B cell (primary cell): ENCODE measurements at regions of chr20 and their contacts with region 1.

Region 1: DNA sequence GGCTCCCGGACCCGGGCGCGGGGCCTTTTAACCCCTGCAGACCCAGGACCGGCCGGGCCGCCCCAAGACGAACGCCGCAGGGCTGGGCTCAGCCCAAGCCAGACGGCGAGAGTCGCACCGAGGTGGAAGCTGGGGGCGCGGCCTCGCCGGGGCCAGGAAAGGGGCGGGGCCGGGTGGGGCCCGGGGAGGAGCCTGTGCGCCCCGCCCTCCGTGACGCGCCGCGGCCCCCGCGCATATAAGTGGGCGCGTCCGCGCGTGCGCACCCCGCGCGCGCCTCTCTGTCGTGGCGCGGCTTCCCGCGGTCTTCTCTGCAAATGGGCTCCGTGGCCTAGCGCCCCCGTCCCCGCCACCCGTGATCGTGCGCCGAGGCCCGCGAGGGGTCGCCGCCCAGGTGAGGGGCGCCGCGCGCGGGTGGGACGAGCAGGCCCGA is at the start of gene PPDPF:
- DNase-seq: peak; percentile 92
- ATAC-seq: peak; percentile 81
- H3K4me3 ChIP-seq: peak within 1 kb of the TSS; percentile 21 to 79 (median 74)
- H3K4me3 Mint-ChIP-seq: peak within 1 kb of the TSS; percentile 86
- H3K27ac ChIP-seq: peak within 1 kb of the TSS; percentile 63 to 76
- H3K27ac Mint-ChIP-seq: peak within 1 kb of the TSS; percentile 90
- H3K4me1 ChIP-seq: peaks cover 16 to 23% of the 10 kb centered on the region in 2 donors
- H3K4me1 Mint-ChIP-seq: peaks cover 31% of the 10 kb centered on the region
- H3K27me3 ChIP-seq: peaks cover 0 to 10% (median 3%) of the 10 kb centered on the region in 4 experiments
- H3K27me3 Mint-ChIP-seq: peaks cover 4% of the 10 kb centered on the region
- CTCF ChIP-seq: no peak
- total RNA-seq, gene PPDPF: 149 and 162 TPM in 2 replicates

Region 2: GRCh38 chr20:63309261-63310071 is 211.1 kb before region 1 on chr20:
- CTCF ChIA-PET with region 1: no interaction called
- POLR2A ChIA-PET with region 1: no interaction called
- intact Hi-C with region 1: no loop called
- DNase-seq: no peak
- ATAC-seq: no peak
- H3K4me3 ChIP-seq: no peak overlapping the region
- H3K4me3 Mint-ChIP-seq: no peak overlapping the region
- H3K27ac ChIP-seq: no peak overlapping the region
- H3K27ac Mint-ChIP-seq: no peak overlapping the region
- H3K4me1 ChIP-seq: no peaks in the 10 kb centered on the region
- H3K4me1 Mint-ChIP-seq: no peaks in the 10 kb centered on the region
- H3K27me3 ChIP-seq: peaks cover 0 to 12% (median 0%) of the 10 kb centered on the region in 4 experiments
- H3K27me3 Mint-ChIP-seq: peaks cover 4% of the 10 kb centered on the region
- CTCF ChIP-seq: peak; percentile 58

Region 3: DNA sequence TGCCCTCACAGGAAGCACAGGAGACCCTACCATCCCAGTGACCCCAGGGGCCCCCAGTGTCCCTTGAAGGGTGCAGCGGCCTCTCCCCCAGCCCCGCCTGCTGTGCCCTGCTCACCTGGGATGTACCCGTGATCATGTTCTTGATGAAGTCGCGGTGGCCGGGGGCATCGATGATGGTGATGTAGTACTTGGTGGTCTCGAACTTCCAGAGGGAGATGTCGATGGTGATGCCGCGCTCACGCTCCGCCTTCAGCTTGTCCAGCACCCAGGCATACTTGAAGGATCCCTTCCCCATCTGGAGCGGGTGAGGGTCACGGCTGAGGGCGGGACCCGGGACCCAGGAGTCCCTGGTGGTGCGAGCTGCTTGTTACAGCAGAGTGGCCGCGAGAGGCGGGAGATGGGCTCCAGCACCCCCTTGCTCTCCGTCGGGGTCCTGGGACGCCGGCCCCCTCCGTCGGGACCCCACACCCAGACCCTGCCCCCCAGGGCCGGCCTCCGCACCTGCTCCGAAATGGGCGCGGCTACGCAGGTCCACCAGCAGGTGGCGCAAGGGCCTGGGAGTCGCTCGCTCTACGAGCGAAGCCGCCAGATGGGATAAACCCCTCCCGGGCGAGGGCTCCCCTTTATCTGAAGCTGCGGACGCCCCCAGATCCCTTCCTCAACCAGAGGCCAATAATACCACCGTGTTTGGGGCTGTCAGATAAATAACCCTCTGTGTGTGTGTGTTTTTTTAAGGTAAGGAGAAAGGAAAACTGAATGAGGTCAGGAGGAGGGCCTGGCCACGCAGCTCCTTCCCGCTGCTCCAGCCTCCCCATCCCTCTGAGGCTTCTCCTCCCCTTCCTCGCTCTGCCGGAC is 24.6 kb before region 1 on chr20:
- CTCF ChIA-PET with region 1: interaction called, 9 read pairs
- POLR2A ChIA-PET with region 1: interaction called, 5 read pairs
- intact Hi-C with region 1: loop called (anchors 2 kb)
- DNase-seq: peak; percentile 84
- ATAC-seq: peak; percentile 66
- H3K4me3 ChIP-seq: peak overlapping the region in 4 of 5 experiments; percentile 8 to 40 (median 34)
- H3K4me3 Mint-ChIP-seq: peak overlapping the region; percentile 79
- H3K27ac ChIP-seq: no peak overlapping the region
- H3K27ac Mint-ChIP-seq: no peak overlapping the region
- H3K4me1 ChIP-seq: peaks cover 19 to 26% of the 10 kb centered on the region in 2 donors
- H3K4me1 Mint-ChIP-seq: peaks cover 7% of the 10 kb centered on the region
- H3K27me3 ChIP-seq: peaks cover 0 to 40% (median 16%) of the 10 kb centered on the region in 4 experiments
- H3K27me3 Mint-ChIP-seq: peaks cover 11% of the 10 kb centered on the region
- CTCF ChIP-seq: peak; percentile 95

Region 4: DNA sequence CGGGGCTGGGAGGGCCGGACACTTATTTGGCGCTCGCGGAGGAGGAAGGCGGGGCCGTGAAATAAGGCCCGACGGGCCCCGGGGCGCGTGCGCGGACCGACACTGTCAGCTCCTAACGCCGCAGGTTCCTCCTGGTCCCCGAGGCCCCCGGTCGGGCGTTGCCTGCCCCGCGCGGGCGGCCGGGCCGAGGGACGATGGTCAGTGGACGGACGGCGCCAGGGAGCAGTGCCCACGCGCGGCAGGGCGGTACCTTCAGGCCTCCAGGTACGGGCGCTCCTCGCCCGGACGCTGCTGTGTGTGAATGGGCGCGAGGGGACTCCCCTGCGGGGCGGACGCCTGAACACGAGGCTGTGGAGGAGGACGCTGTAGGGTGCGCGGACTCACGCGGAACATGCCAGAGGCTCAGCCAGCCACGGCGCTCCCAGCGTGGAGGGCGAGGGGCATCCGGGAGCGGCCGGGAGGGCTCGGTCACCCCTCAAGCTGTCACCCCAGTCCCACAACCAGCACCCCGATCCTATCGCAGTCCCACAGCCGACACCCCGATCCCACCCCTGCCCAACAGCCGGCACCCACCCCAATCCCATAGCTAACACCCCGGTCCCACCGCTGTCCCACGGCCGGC is 106.7 kb after region 1 on chr20:
- CTCF ChIA-PET with region 1: no interaction called
- POLR2A ChIA-PET with region 1: interaction called, 6 read pairs
- intact Hi-C with region 1: loop called (anchors 1 kb)
- DNase-seq: peak; percentile 98
- ATAC-seq: peak; percentile 78
- H3K4me3 ChIP-seq: peak overlapping the region; percentile 38 to 90 (median 87)
- H3K4me3 Mint-ChIP-seq: peak overlapping the region; percentile 95
- H3K27ac ChIP-seq: peak overlapping the region; percentile 75 to 84
- H3K27ac Mint-ChIP-seq: peak overlapping the region; percentile 93
- H3K4me1 ChIP-seq: peaks cover 33 to 47% of the 10 kb centered on the region in 2 donors
- H3K4me1 Mint-ChIP-seq: peaks cover 37% of the 10 kb centered on the region
- H3K27me3 ChIP-seq: no peaks in the 10 kb centered on the region
- H3K27me3 Mint-ChIP-seq: no peaks in the 10 kb centered on the region
- CTCF ChIP-seq: no peak

Region 5: GRCh38 chr20:63657937-63658748 is 137.6 kb after region 1 on chr20 and contains the start of gene RTEL1:
- CTCF ChIA-PET with region 1: interaction called, 3 read pairs
- POLR2A ChIA-PET with region 1: no interaction called
- intact Hi-C with region 1: loop called (anchors 1 kb)
- DNase-seq: peak; percentile 95
- ATAC-seq: peak; percentile 91
- H3K4me3 ChIP-seq: peak within 1 kb of the TSS; percentile 51 to 94 (median 84)
- H3K4me3 Mint-ChIP-seq: peak within 1 kb of the TSS; percentile 98
- H3K27ac ChIP-seq: peak within 1 kb of the TSS; percentile 47 to 70
- H3K27ac Mint-ChIP-seq: peak within 1 kb of the TSS; percentile 96
- H3K4me1 ChIP-seq: peaks cover 21 to 36% of the 10 kb centered on the region in 2 donors
- H3K4me1 Mint-ChIP-seq: peaks cover 21% of the 10 kb centered on the region
- H3K27me3 ChIP-seq: peaks cover 0 to 28% (median 10%) of the 10 kb centered on the region in 4 experiments
- H3K27me3 Mint-ChIP-seq: no peaks in the 10 kb centered on the region
- CTCF ChIP-seq: no peak
- total RNA-seq, gene RTEL1: 32.6 and 35.3 TPM in 2 replicates

Region 6: DNA sequence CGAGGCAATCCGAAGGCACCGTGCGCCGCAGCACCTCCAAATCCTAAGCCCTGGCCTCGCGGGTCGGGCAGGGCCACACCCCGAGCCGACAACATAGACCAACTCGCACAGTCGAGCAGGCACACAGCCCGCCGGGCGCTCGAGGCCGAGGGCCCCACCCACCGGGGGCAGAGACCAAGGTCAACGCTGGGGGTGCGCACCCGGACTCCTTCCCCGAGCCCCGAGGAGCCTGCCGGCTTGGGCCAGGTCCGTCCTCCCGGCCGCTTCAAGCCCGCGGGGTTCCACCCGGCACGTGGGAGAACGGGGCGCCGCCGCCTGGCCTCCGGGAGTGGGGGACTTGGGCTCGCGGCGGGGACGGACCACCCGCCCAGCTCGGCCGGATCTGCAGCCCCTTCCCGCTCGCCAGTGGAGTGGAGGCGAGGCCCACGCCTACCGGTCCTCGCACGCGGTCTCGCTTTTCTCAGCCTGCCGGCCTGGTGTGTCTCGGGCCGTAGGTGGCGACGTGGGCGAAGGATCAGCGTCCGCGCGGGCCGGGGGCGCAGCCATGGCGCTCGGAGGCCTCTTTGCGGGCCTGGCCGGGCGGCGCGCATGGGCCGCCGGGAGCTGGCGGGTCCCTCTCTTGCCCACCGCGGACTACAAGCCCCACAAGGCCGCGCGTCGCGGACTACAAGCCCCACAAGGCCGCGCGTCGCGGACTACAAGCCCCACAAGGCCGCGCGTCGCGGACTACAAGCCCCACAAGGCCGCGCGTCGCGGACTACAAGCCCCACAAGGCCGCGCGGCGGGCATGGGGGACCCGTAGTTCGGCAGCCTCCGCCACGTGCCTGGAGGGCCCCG is 435.5 kb after region 1 on chr20 and contains the start of gene UCKL1:
- CTCF ChIA-PET with region 1: no interaction called
- POLR2A ChIA-PET with region 1: no interaction called
- intact Hi-C with region 1: loop called (anchors 2 kb)
- DNase-seq: peak; percentile 91
- ATAC-seq: peak; percentile 76
- H3K4me3 ChIP-seq: peak within 1 kb of the TSS; percentile 36 to 91 (median 84)
- H3K4me3 Mint-ChIP-seq: peak within 1 kb of the TSS; percentile 90
- H3K27ac ChIP-seq: peak within 1 kb of the TSS; percentile 57 to 85
- H3K27ac Mint-ChIP-seq: peak within 1 kb of the TSS; percentile 90
- H3K4me1 ChIP-seq: peaks cover 39 to 49% of the 10 kb centered on the region in 2 donors
- H3K4me1 Mint-ChIP-seq: peaks cover 37% of the 10 kb centered on the region
- H3K27me3 ChIP-seq: no peaks in the 10 kb centered on the region
- H3K27me3 Mint-ChIP-seq: no peaks in the 10 kb centered on the region
- CTCF ChIP-seq: no peak
- total RNA-seq, gene UCKL1: 104 and 106 TPM in 2 replicates